ENCODE measurements at regions of chr4 and their contacts with region 1.

Region 1: GRCh38 chr4:83074086-83074704 is 39.2 kb downstream of the COPS4 start:
- DNase-seq: peak; percentile 78
- H3K4me3 Mint-ChIP-seq: no peak overlapping the region
- H3K27ac Mint-ChIP-seq: no peak overlapping the region
- H3K4me1 Mint-ChIP-seq: peaks cover 27% of the 10 kb centered on the region
- H3K27me3 Mint-ChIP-seq: no peaks in the 10 kb centered on the region
- CTCF ChIP-seq: peak; percentile 49

Region 2: DNA sequence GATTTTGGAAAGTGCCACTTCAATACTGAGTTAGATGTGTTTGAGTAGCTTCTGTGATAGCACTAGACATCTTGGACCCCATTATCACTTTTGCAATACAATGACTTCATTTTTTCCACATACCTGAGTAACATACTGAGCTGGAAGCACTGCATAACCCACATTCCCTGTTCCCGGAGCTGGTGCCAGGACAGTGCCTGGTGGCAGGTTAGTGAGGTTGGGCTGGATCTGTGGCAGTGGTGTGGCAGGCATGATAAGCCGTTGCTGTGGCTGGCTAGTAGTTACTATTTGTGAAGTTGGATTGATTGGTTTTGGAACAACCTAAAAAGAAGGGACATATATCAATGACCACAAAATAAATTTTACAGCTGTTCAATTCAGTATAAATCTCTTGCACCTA is 134.8 kb before region 1 on chr4:
- CTCF ChIA-PET with region 1: no interaction called
- POLR2A ChIA-PET with region 1: no interaction called
- intact Hi-C with region 1: no loop called
- DNase-seq: no peak
- H3K4me3 Mint-ChIP-seq: no peak overlapping the region
- H3K27ac Mint-ChIP-seq: no peak overlapping the region
- H3K4me1 Mint-ChIP-seq: no peaks in the 10 kb centered on the region
- H3K27me3 Mint-ChIP-seq: no peaks in the 10 kb centered on the region
- CTCF ChIP-seq: no peak

Region 3: DNA sequence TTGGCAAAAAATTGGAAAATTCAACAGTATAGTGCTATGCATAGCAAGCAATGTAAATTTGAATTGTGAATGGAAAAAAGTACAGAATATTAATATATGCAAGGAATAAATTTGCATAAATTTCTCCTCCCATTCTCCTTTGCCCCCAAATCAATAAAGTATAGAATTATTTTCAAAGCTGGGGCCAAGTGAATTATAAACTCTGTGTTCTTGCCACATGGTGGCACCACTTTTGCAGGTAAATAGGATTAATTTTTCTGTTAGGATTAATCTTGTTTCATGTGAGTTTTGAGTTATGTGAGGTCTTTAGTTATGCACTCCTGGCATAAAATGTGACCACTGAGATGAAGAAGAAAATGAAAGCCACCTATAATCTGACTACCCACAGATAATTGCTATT is 19.3 kb before region 1 on chr4:
- CTCF ChIA-PET with region 1: interaction called, 10 read pairs
- POLR2A ChIA-PET with region 1: no interaction called
- intact Hi-C with region 1: no loop called
- DNase-seq: peak; percentile 45
- H3K4me3 Mint-ChIP-seq: no peak overlapping the region
- H3K27ac Mint-ChIP-seq: no peak overlapping the region
- H3K4me1 Mint-ChIP-seq: no peaks in the 10 kb centered on the region
- H3K27me3 Mint-ChIP-seq: no peaks in the 10 kb centered on the region
- CTCF ChIP-seq: peak; percentile 34

Region 4: GRCh38 chr4:83110223-83110945 is 36.2 kb after region 1 on chr4:
- CTCF ChIA-PET with region 1: interaction called, 16 read pairs
- POLR2A ChIA-PET with region 1: interaction called, 7 read pairs
- intact Hi-C with region 1: no loop called
- DNase-seq: peak; percentile 79
- H3K4me3 Mint-ChIP-seq: peak overlapping the region; percentile 68
- H3K27ac Mint-ChIP-seq: peak overlapping the region; percentile 79
- H3K4me1 Mint-ChIP-seq: peaks cover 25% of the 10 kb centered on the region
- H3K27me3 Mint-ChIP-seq: no peaks in the 10 kb centered on the region
- CTCF ChIP-seq: peak; percentile 44

Region 5: GRCh38 chr4:83252782-83253405 is 178.7 kb after region 1 on chr4:
- CTCF ChIA-PET with region 1: interaction called, 14 read pairs
- POLR2A ChIA-PET with region 1: interaction called, 4 read pairs
- intact Hi-C with region 1: loop called (anchors 1 kb)
- DNase-seq: peak; percentile 81
- H3K4me3 Mint-ChIP-seq: no peak overlapping the region
- H3K27ac Mint-ChIP-seq: no peak overlapping the region
- H3K4me1 Mint-ChIP-seq: peaks cover 18% of the 10 kb centered on the region
- H3K27me3 Mint-ChIP-seq: no peaks in the 10 kb centered on the region
- CTCF ChIP-seq: peak; percentile 53

Region 6: GRCh38 chr4:83259586-83259985 is 185.4 kb after region 1 on chr4:
- CTCF ChIA-PET with region 1: interaction called, 78 read pairs
- POLR2A ChIA-PET with region 1: interaction called, 4 read pairs
- intact Hi-C with region 1: loop called (anchors 1 kb)
- DNase-seq: no peak
- H3K4me3 Mint-ChIP-seq: no peak overlapping the region
- H3K27ac Mint-ChIP-seq: no peak overlapping the region
- H3K4me1 Mint-ChIP-seq: peaks cover 13% of the 10 kb centered on the region
- H3K27me3 Mint-ChIP-seq: no peaks in the 10 kb centered on the region
- CTCF ChIP-seq: no peak

Region 7: GRCh38 chr4:83267121-83267829 is 193.1 kb after region 1 on chr4:
- CTCF ChIA-PET with region 1: interaction called, 78 read pairs
- POLR2A ChIA-PET with region 1: interaction called, 4 read pairs
- intact Hi-C with region 1: no loop called
- DNase-seq: peak; percentile 96
- H3K4me3 Mint-ChIP-seq: no peak overlapping the region
- H3K27ac Mint-ChIP-seq: peak overlapping the region; percentile 49
- H3K4me1 Mint-ChIP-seq: peaks cover 11% of the 10 kb centered on the region
- H3K27me3 Mint-ChIP-seq: no peaks in the 10 kb centered on the region
- CTCF ChIP-seq: no peak

Region 8: DNA sequence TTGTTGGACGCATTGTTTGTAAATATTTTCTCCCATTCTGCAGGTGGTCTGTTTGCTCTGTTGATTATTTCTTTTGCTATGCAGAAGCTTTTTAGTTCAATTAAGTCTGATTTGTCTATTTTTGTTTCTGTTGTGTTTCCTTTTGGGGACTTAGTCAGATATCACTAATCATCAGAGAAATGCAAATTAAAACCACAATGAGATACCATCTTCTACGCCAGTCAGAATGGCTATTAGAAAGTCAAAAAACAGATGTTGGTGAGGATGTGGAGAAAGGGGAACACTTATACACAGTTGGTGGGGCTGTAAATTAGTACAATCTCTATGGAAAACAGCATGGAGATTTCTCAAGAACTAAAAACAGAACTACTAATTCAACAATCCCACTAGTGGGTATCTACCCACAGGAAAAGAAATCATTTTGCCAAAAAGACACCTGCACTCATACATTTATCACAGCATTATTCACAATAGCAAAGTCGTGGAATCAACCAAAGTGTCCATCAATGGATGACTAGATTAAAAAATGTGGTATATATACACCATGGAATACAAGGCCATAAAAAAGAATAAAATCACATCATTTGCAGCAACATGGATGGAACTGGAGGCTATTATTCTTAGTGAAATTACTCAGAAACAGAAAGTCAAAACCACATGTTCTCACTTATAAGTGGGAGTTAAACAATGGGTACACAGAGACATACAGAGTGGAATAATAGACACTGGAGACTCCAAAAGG is 202.3 kb after region 1 on chr4:
- CTCF ChIA-PET with region 1: interaction called, 85 read pairs
- POLR2A ChIA-PET with region 1: interaction called, 7 read pairs
- intact Hi-C with region 1: no loop called
- DNase-seq: no peak
- H3K4me3 Mint-ChIP-seq: no peak overlapping the region
- H3K27ac Mint-ChIP-seq: peak overlapping the region; percentile 32
- H3K4me1 Mint-ChIP-seq: peaks cover 8% of the 10 kb centered on the region
- H3K27me3 Mint-ChIP-seq: no peaks in the 10 kb centered on the region
- CTCF ChIP-seq: no peak